Right lobe of liver (tissue), 6 donors: ENCODE measurements at regions of chr9 and their contacts with region 1.

Region 1: DNA sequence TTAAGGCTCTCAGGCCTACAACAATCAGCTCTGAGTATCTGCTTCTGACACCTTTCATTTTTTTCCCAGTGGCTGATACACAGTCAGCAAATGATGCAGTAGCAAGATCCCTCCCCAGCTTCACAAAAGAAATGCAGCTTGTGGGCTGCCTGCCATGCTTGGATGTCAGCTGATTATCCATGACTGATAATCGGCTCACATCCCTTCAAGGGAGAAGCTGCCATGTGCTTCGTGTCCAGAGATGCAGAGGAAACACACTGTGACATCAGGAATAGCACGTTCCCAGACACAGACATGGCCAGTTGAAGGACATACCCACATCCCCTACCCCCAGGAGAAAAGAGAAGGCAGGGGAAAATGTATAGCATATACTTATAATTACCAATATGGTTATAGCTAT is 27.9 kb downstream of the TMEM215 start:
- DNase-seq: no peak
- ATAC-seq: no peak
- H3K4me3 ChIP-seq: no peak overlapping the region
- H3K27ac ChIP-seq: no peak overlapping the region
- H3K4me1 ChIP-seq: no peaks in the 10 kb centered on the region
- H3K27me3 ChIP-seq: no peaks in the 10 kb centered on the region
- CTCF ChIP-seq: no peak
- POLR2A ChIP-seq: no peak

Region 2: DNA sequence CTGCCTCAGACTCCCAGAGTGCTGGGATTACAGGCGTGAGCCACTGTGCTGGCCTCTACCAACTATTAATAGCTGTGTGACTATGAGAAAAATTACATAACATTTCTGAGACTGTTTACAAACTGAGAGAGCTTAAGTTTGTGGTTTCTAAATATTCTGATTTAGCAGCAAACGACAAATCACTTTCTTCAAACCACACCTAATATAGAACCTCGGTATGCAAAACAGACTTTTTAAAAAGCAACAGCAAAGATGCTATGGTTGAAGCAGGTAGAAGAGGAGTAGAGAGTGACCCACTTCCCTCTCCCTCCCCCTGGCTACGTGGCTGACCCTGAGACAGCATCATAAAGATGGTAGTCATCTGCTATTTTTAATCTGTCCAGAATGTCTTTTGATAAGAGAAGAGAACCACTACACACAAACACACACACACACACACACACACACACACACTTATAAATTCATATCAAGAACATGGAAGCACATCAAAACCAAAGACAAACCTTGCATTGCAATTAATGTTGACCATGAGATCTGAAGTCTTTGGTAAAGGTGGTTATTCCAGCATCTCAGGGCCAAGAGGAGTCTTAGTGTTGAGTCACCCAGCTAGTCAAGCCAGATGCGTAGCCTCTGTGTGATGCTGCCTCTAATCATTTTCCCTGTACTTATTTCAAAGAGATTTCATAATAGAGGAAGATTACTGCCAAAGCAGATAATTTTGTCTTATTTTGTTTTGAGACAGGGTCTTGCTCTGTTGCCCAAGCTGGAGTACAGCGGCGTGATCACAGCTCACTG is 86.0 kb before region 1 on chr9:
- intact Hi-C with region 1: no loop called
- DNase-seq: no peak
- ATAC-seq: no peak
- H3K4me3 ChIP-seq: no peak overlapping the region
- H3K27ac ChIP-seq: no peak overlapping the region
- H3K4me1 ChIP-seq: no peaks in the 10 kb centered on the region
- H3K27me3 ChIP-seq: no peaks in the 10 kb centered on the region
- CTCF ChIP-seq: no peak
- POLR2A ChIP-seq: no peak

Region 3: GRCh38 chr9:32755730-32756129 is 55.5 kb before region 1 on chr9:
- intact Hi-C with region 1: loop called in 1 of 2 experiments (anchors 10 kb)
- DNase-seq: no peak
- ATAC-seq: no peak
- H3K4me3 ChIP-seq: no peak overlapping the region
- H3K27ac ChIP-seq: no peak overlapping the region
- H3K4me1 ChIP-seq: no peaks in the 10 kb centered on the region
- H3K27me3 ChIP-seq: no peaks in the 10 kb centered on the region
- CTCF ChIP-seq: no peak
- POLR2A ChIP-seq: no peak